B cell (primary cell): ENCODE measurements at regions of chr2 and their contacts with region 1.

Region 1: GRCh38 chr2:37623971-37624900 is 47.2 kb downstream of the CDC42EP3 start:
- DNase-seq: peak; percentile 57
- ATAC-seq: peak; percentile 46
- H3K4me3 ChIP-seq: no peak overlapping the region
- H3K4me3 Mint-ChIP-seq: peak overlapping the region; percentile 55
- H3K27ac ChIP-seq: peak overlapping the region; percentile 58 to 61
- H3K27ac Mint-ChIP-seq: peak overlapping the region; percentile 92
- H3K4me1 ChIP-seq: peaks cover 52 to 54% of the 10 kb centered on the region in 2 donors
- H3K4me1 Mint-ChIP-seq: peaks cover 60% of the 10 kb centered on the region
- H3K27me3 ChIP-seq: no peaks in the 10 kb centered on the region
- H3K27me3 Mint-ChIP-seq: no peaks in the 10 kb centered on the region
- CTCF ChIP-seq: no peak

Region 2: DNA sequence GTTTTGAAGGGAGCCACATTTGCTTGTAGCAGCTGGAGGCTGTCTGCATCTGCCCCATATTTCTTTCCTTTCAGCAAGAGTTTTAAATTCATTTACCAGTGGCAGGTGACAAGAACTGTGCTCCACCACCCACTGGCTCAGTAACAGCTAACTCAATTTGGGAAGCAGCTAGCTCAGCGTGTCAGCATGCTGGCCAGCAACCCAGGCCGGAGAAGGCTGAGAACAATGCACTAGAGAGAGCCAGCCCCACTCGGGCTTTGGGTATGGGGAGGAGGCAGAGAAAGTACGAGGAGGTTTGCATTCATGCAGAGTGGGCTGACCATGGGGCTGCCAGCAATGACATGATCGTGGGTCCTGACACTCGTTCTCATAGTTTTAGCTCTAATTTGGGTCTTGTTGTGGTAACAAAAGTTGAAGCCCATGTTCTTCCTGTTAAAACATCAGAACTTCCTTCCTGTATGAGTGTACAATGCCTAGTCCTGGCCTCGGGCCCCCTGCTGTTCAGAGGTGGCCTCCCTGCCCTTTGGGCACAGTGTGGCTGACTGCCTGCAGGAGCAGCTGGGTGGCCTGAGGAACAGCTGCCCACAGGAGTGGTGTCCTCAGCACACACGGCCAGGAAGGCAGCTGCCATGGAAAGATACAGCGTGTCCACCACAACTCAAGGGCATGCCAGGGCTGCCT is 24.2 kb after region 1 on chr2:
- CTCF ChIA-PET with region 1: interaction called, 10 read pairs
- POLR2A ChIA-PET with region 1: interaction called, 5 read pairs
- intact Hi-C with region 1: no loop called
- DNase-seq: peak; percentile 41
- ATAC-seq: peak; percentile 53
- H3K4me3 ChIP-seq: no peak overlapping the region
- H3K4me3 Mint-ChIP-seq: peak overlapping the region; percentile 41
- H3K27ac ChIP-seq: peak overlapping the region; percentile 45 to 58
- H3K27ac Mint-ChIP-seq: peak overlapping the region; percentile 87
- H3K4me1 ChIP-seq: peaks cover 66 to 67% of the 10 kb centered on the region in 2 donors
- H3K4me1 Mint-ChIP-seq: peaks cover 83% of the 10 kb centered on the region
- H3K27me3 ChIP-seq: no peaks in the 10 kb centered on the region
- H3K27me3 Mint-ChIP-seq: no peaks in the 10 kb centered on the region
- CTCF ChIP-seq: no peak